ENCODE measurements at regions of chr6 and their contacts with region 1.

Region 1: GRCh38 chr6:136723780-136724179 is 68.5 kb downstream of the MAP3K5 start:
- DNase-seq: peak in 2 of 3 donors; percentile 21 to 41
- H3K4me3 ChIP-seq: no peak overlapping the region
- H3K4me3 Mint-ChIP-seq: no peak overlapping the region
- H3K27ac ChIP-seq: no peak overlapping the region
- H3K27ac Mint-ChIP-seq: peak overlapping the region in 3 of 7 donors; percentile 1 to 70 (median 16)
- H3K4me1 ChIP-seq: peaks cover 22 to 32% of the 10 kb centered on the region in 2 donors
- H3K4me1 Mint-ChIP-seq: peaks cover 38% of the 10 kb centered on the region
- H3K27me3 ChIP-seq: no peaks in the 10 kb centered on the region
- H3K27me3 Mint-ChIP-seq: peaks cover 0 to 2% (median 0%) of the 10 kb centered on the region in 3 donors
- CTCF ChIP-seq: no peak

Region 2: GRCh38 chr6:136695412-136695811 is 28.4 kb before region 1 on chr6:
- intact Hi-C with region 1: loop called in 1 of 2 experiments (anchors 2 kb)
- DNase-seq: no peak
- H3K4me3 ChIP-seq: no peak overlapping the region
- H3K4me3 Mint-ChIP-seq: no peak overlapping the region
- H3K27ac ChIP-seq: no peak overlapping the region
- H3K27ac Mint-ChIP-seq: peak overlapping the region in 1 of 7 donors; percentile 68
- H3K4me1 ChIP-seq: no peaks in the 10 kb centered on the region
- H3K4me1 Mint-ChIP-seq: peaks cover 9% of the 10 kb centered on the region
- H3K27me3 ChIP-seq: no peaks in the 10 kb centered on the region
- H3K27me3 Mint-ChIP-seq: no peaks in the 10 kb centered on the region
- CTCF ChIP-seq: no peak

Region 3: DNA sequence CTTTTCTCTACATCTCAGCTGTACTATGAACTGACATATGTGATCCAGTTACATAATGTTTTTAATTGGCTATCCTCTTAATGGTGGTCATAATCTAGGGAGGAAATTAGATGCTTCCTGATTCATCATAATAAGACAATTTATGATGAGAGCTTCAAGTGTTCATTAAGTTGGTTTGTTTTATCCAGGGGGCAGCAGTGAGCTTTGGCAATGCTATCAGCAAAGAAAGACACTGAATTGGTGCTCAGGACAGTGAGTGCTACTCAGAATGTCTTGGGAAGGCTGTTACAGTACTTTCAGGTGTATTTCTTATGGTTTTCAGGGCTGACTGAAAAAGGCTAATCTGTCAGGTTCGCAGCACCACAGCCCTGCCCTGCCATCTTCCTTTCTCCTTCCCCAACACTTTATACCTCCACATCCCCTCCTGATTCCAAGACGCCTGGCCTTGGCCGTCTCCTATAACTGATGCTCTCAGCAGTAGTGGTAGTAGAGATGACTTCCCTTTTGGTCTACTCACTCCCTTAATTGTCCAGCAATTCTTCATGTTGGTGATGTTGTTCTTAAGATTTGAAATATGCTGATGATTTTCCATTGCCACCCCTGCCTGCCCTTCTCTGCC is 1076.3 kb after region 1 on chr6:
- intact Hi-C with region 1: no loop called
- DNase-seq: peak; percentile 73 to 84 (median 78)
- H3K4me3 ChIP-seq: no peak overlapping the region
- H3K4me3 Mint-ChIP-seq: no peak overlapping the region
- H3K27ac ChIP-seq: no peak overlapping the region
- H3K27ac Mint-ChIP-seq: peak overlapping the region in 4 of 7 donors; percentile 42 to 88 (median 62)
- H3K4me1 ChIP-seq: peaks cover 0 to 11% of the 10 kb centered on the region in 2 donors
- H3K4me1 Mint-ChIP-seq: peaks cover 16% of the 10 kb centered on the region
- H3K27me3 ChIP-seq: no peaks in the 10 kb centered on the region
- H3K27me3 Mint-ChIP-seq: no peaks in the 10 kb centered on the region
- CTCF ChIP-seq: peak; percentile 69